KBM-7 (cell line): ENCODE measurements at regions of chr4 and their contacts with region 1.

Region 1: DNA sequence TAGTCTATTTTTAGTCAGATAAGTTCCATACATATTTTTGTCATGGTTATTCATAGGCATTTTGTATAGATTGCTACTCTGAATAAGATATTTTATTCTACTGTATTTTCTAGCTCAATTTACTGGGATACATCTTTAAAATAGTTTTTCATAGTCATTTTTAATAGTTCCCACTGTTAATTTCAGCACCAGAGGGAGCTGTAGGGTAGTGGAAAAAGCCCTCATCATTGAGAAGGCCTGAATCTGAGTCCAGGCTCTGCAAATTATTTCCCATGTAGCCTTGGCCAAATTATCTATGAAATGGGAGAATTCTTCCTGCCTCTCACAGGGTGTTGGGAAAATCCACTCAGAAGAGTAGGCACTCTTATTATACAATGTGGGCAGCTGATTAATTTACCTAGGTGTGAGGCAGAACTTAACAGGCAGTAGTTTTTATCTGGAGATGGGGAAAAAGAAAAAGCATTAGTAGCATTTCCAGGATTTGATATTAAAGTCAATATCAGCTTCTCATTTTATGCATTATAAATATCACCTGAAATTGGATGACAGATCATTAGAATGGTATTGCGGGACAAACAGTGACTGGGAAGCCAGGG is 102.9 kb upstream of the PAQR3 start:
- DNase-seq: peak; percentile 83

Region 2: GRCh38 chr4:79241846-79242245 is 199.7 kb after region 1 on chr4:
- in situ Hi-C with region 1: loop called (anchors 25 kb)
- DNase-seq: peak; percentile 66